Activated naive CD4-positive, alpha-beta T cell treated with anti-CD3 and anti-CD28 coated beads for 36 hours (primary cell): ENCODE measurements at regions of chr2 and their contacts with region 1.

Region 1: GRCh38 chr2:231612179-231613053 is 19.8 kb downstream of the TEX44 start:
- DNase-seq: peak; percentile 99
- H3K4me3 Mint-ChIP-seq: peak overlapping the region; percentile 81
- H3K27ac Mint-ChIP-seq: peak overlapping the region; percentile 98
- H3K4me1 Mint-ChIP-seq: peaks cover 46% of the 10 kb centered on the region
- H3K27me3 Mint-ChIP-seq: no peaks in the 10 kb centered on the region

Region 2: DNA sequence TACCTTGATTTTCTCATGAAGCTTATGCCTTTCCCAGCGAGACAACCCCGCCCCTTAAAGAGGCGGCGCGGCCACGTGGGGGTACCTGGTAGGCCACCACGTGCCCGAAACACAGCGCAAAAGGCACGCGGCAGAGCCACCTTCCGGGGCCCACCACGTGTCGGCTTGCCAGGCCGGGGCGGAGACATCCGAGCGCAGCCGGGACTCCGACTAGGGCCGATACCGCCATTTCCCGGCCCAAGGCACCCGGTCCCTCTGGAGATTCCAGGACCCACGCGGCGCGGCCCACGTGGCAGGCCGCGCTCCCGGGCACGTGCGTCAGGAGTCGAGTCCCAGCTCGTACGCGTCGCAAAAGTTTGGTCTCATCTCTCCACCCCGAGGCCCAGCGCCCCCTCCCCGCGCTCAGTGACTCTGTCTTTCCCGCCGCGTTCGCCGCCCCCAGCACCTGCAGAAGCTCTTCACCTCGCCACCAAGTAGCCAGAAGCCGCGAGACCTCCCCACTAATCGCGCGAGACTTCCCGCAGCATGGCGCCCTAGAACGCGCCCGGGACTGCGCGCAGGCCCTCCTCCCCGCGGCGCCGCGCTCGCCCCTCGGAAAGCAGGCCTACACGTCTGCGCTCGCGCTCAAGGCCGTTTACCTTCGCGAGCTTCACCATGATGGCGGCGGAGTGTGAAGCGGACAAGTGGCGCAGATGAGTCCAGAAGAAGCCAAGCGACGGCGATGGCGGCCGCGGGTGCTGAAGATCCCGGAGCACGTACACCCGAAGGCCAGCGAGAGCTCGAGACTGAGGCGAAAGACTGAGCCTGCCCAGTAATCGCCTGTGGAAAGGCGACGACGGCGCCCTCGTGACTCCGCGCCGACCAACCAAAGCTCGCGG is 148.5 kb before region 1 on chr2 and contains the start of gene NCL:
- CTCF ChIA-PET with region 1: no interaction called
- intact Hi-C with region 1: loop called (anchors 1 kb)
- DNase-seq: peak; percentile 87
- H3K4me3 Mint-ChIP-seq: peak within 1 kb of the TSS; percentile 97
- H3K27ac Mint-ChIP-seq: peak within 1 kb of the TSS; percentile 98
- H3K4me1 Mint-ChIP-seq: peaks cover 46% of the 10 kb centered on the region
- H3K27me3 Mint-ChIP-seq: no peaks in the 10 kb centered on the region
- total RNA-seq, gene NCL: 908 to 911 TPM

Region 3: DNA sequence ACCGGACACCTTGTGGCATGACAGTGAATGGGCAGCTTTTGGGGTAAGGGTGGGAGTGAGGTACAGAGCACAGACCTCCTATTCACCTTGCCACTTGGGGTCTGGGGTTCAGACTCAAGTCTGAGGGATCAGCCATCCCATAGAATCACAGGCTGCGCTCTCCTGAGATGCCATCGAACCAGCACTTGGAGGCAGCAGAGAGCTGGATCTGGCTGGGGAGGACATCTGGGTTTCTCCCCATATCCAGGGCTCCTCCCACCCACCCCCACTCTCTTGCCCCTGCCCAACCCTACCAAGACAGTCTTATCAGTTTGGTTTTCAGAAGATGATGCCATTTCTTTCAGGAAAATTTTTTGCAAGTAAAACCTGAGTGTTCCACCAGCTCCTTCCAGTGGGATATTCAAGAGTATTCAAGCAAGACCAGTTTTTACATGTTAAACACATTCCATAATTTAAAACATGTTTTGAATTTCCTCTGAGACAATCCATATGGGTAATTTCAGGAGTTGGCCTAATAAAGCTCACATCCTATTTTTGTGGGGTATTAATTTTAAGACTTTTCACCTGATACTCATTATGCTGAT is 48.9 kb before region 1 on chr2:
- CTCF ChIA-PET with region 1: interaction called, 3 read pairs
- intact Hi-C with region 1: loop called (anchors 2 kb)
- DNase-seq: peak; percentile 74
- H3K4me3 Mint-ChIP-seq: no peak overlapping the region
- H3K27ac Mint-ChIP-seq: no peak overlapping the region
- H3K4me1 Mint-ChIP-seq: peaks cover 2% of the 10 kb centered on the region
- H3K27me3 Mint-ChIP-seq: no peaks in the 10 kb centered on the region

Region 4: DNA sequence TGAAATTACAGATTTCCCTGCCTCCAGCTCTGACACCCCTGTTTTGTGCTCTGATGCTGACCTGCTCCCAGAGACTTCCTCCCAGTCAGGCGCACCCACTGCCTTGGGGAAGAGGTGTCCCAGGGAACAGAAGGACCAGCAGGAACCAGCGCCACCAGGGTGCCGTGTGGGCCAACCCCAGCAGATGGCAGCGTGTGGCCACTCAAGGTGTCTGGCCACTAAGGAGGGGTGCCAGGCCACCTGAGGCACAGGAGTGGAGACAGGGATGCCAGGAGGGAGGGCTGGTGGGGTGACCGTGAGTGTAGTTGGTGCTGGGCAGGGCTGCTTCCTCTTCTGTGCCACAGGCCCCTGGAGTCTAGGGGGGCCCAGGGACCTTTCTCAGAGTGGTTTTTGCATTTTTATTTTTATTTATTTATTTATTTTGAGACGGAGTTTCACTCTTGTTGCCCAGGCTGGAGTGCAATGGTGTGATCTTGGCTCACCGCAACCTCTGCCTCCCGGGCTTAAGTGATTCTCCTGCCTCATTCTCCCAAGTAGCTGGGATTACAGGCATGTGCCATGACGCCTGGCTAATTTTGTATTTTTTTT is 36.3 kb after region 1 on chr2:
- CTCF ChIA-PET with region 1: interaction called, 5 read pairs
- intact Hi-C with region 1: loop called (anchors 1 kb)
- DNase-seq: peak; percentile 77
- H3K4me3 Mint-ChIP-seq: no peak overlapping the region
- H3K27ac Mint-ChIP-seq: no peak overlapping the region
- H3K4me1 Mint-ChIP-seq: peaks cover 4% of the 10 kb centered on the region
- H3K27me3 Mint-ChIP-seq: no peaks in the 10 kb centered on the region

Region 5: GRCh38 chr2:231674587-231675338 is 62.3 kb after region 1 on chr2:
- CTCF ChIA-PET with region 1: interaction called, 201 read pairs
- intact Hi-C with region 1: loop called (anchors 1 kb)
- DNase-seq: peak; percentile 72
- H3K4me3 Mint-ChIP-seq: no peak overlapping the region
- H3K27ac Mint-ChIP-seq: no peak overlapping the region
- H3K4me1 Mint-ChIP-seq: peaks cover 8% of the 10 kb centered on the region
- H3K27me3 Mint-ChIP-seq: no peaks in the 10 kb centered on the region

Region 6: GRCh38 chr2:231713730-231714430 is 101.5 kb after region 1 on chr2:
- CTCF ChIA-PET with region 1: interaction called, 134 read pairs
- intact Hi-C with region 1: loop called (anchors 1 kb)
- DNase-seq: peak; percentile 95
- H3K4me3 Mint-ChIP-seq: peak overlapping the region; percentile 46
- H3K27ac Mint-ChIP-seq: peak overlapping the region; percentile 94
- H3K4me1 Mint-ChIP-seq: peaks cover 27% of the 10 kb centered on the region
- H3K27me3 Mint-ChIP-seq: no peaks in the 10 kb centered on the region

Region 7: GRCh38 chr2:231786177-231786916 is 173.9 kb after region 1 on chr2 and contains the start of gene COPS7B:
- CTCF ChIA-PET with region 1: no interaction called
- intact Hi-C with region 1: loop called (anchors 1 kb)
- DNase-seq: peak; percentile 88
- H3K4me3 Mint-ChIP-seq: peak within 1 kb of the TSS; percentile 86
- H3K27ac Mint-ChIP-seq: peak within 1 kb of the TSS; percentile 84
- H3K4me1 Mint-ChIP-seq: peaks cover 66% of the 10 kb centered on the region
- H3K27me3 Mint-ChIP-seq: no peaks in the 10 kb centered on the region
- total RNA-seq, gene COPS7B: 47.3 to 52.8 TPM

Region 8: DNA sequence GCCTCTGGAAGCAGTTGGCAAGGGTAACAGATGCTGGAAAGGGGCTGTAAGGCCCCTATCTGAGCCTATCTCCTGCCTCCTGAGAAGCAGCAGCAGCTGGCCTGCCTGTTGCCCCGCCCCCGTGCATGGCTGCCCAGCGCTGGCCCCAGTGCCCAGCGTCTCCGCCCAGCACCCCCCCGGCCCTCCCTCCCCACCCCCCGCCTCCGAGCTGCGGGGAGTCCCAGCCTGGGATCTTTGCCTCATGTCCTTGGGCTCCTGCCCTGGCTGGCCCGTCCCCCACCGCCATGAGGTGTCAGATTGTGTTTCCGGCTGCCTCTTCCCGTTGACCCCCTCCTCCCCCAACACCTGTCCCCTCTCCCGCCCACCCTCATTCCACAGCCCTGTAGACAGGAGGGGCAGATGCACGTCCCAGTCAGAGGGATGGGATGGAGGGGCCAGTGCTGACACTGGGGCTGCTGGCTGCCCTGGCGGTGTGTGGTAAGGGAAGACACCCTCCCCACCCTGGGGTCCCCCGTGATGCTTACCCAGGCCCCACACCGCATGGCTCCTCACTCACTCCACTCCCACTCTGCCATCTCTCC is 913.5 kb after region 1 on chr2 and contains the start of gene CHRND:
- CTCF ChIA-PET with region 1: no interaction called
- intact Hi-C with region 1: no loop called
- DNase-seq: no peak
- H3K4me3 Mint-ChIP-seq: no peak within 1 kb of the TSS
- H3K27ac Mint-ChIP-seq: no peak within 1 kb of the TSS
- H3K4me1 Mint-ChIP-seq: peaks cover 21% of the 10 kb centered on the region
- H3K27me3 Mint-ChIP-seq: peaks cover 42% of the 10 kb centered on the region
- total RNA-seq, gene CHRND: not detected